Pancreas (tissue), 10 donors: ENCODE measurements at regions of chr3 and their contacts with region 1.

Region 1: DNA sequence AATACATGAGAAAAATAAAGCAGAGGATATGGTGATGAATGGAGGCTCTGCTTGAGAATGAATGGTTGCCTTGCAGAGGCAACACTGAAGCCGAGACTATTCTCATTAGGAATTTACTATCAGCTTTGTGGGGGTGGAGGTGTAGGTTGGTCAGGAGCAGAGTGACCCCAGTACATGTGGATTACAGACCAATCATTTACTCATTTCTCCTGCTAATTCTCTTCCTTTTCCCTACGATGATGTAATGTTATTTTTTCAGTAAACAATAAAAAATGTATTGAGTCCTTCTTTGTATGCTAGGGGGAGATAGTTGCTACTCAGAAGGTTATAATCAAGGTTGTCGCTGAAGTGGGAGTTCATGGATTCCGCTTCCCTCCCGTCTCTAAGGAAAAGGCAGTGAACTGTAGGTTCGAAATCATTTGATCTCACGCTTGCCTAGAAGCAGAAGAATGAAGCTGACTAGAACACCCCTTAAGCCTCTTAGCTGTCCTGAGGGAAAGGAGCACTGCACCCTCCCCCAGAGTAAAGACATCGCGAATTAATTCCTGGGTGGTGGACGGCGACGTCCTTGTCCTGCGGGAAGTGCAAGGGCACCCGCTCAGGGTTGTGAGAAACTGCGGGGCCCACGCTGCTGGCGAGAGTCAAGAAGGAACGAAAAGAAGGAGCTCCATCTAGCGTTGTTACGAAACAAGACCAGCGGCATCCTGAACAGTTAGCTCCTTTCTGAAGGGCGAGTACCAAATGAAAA is 213.2 kb upstream of the PFN2 start:
- DNase-seq: peak; percentile 54 to 78 (median 63)
- ATAC-seq: peak; percentile 87 to 95 (median 92)
- H3K4me3 ChIP-seq: peak overlapping the region in 2 of 4 donors; percentile 21 to 29
- H3K27ac ChIP-seq: no peak overlapping the region
- H3K4me1 ChIP-seq: peaks cover 0 to 13% (median 9%) of the 10 kb centered on the region in 3 donors
- H3K27me3 ChIP-seq: no peaks in the 10 kb centered on the region
- CTCF ChIP-seq: peak in 3 of 4 donors; percentile 31 to 42 (median 32)

Region 2: DNA sequence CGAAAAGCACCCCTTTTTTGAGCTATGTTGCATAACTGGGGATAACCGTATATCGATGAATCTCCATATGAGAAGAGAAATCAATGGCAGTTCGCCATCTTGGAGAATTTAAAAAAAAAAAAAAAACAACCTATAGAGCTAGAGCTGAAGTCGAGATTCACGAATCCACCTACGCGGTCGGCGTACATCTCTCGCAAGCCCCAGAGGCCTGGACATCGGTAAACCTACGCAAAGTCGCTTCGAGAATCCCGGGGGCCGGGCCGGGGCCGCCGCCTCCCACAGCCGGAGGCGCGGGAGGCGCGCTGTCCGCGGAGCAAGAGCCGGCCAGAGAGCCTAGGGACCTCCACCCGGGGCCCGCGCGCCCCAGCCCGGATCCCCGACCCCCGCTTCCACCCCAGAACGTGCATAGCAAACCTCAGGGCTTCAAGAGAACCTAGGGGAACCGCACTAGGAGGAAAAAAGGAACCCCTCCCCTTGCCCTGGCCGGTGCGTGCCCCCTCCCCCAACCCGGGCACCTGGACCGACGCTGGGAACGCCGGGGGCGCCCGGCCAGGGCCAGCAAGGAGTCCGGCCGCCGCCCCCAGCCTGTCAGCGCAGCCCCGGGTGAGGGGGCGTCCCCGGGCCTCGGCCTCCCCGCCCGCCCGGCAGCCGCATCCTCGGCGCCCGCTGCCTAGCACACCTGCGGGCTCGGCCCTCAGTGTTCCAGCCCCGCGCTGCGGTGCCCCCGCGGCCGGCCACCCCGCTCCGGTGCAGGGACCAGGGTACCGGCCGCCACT is 213.7 kb before region 1 on chr3:
- intact Hi-C with region 1: loop called (anchors 10 kb)
- DNase-seq: peak; percentile 79 to 89 (median 82)
- ATAC-seq: peak; percentile 76 to 84 (median 79)
- H3K4me3 ChIP-seq: peak overlapping the region; percentile 77 to 93 (median 89)
- H3K27ac ChIP-seq: peak overlapping the region; percentile 61 to 85 (median 74)
- H3K4me1 ChIP-seq: peaks cover 4 to 13% (median 4%) of the 10 kb centered on the region in 3 donors
- H3K27me3 ChIP-seq: peaks cover 0 to 6% (median 1%) of the 10 kb centered on the region in 4 donors
- CTCF ChIP-seq: no peak